ENCODE measurements at regions of chr13 and their contacts with region 1.

Region 1: DNA sequence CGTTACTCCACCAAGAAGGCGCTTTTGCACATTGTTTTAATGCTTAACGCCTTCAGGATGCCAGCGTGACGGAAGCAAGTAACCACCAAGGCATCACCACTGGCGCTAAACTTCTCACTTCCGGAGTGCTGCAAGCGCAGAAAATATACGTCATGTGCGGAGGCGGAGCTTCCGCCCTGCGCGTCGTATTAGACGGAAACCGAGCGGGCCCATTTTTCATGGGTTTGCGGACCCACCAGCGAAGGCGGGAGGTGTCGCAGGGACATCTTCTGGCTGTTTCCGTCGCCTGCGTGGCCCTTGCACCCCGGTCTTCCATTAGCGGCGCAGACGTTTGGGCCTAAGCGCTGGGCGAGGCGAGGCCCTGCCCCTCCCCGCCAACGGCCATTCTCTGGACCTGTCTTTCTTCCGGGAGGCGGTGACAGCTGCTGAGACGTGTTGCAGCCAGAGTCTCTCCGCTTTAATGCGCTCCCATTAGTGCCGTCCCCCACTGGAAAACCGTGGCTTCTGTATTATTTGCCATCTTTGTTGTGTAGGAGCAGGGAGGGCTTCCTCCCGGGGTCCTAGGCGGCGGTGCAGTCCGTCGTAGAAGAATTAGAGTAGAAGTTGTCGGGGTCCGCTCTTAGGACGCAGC is at the start of gene ERCC5:
- DNase-seq: peak; percentile 84 to 99 (median 96)
- ATAC-seq: peak; percentile 77
- H3K4me3 Mint-ChIP-seq: peak within 1 kb of the TSS; percentile 87 to 99 (median 96)
- H3K27ac Mint-ChIP-seq: peak within 1 kb of the TSS; percentile 90 to 100 (median 99)
- H3K4me1 Mint-ChIP-seq: peaks cover 18 to 49% (median 45%) of the 10 kb centered on the region in 4 donors
- H3K27me3 Mint-ChIP-seq: peaks cover 0 to 3% (median 0%) of the 10 kb centered on the region in 5 donors
- polyA plus RNA-seq, gene ERCC5: 42.2 to 56.9 (median 53.1) TPM

Region 2: GRCh38 chr13:102394158-102395053 is 451.3 kb before region 1 on chr13:
- POLR2A ChIA-PET with region 1: interaction called, 13 read pairs
- DNase-seq: peak; percentile 90 to 99 (median 96)
- ATAC-seq: peak; percentile 90 to 92
- H3K4me3 Mint-ChIP-seq: peak overlapping the region; percentile 84 to 94 (median 90)
- H3K27ac Mint-ChIP-seq: peak overlapping the region; percentile 47 to 94 (median 91)
- H3K4me1 Mint-ChIP-seq: peaks cover 7 to 19% (median 15%) of the 10 kb centered on the region in 4 donors
- H3K27me3 Mint-ChIP-seq: peaks cover 7 to 26% (median 13%) of the 10 kb centered on the region in 5 donors

Region 3: GRCh38 chr13:102580552-102581169 is 265.1 kb before region 1 on chr13:
- POLR2A ChIA-PET with region 1: interaction called, 11 read pairs
- DNase-seq: peak in 8 of 10 donors; percentile 8 to 74 (median 45)
- ATAC-seq: peak; percentile 85 to 88
- H3K4me3 Mint-ChIP-seq: no peak overlapping the region
- H3K27ac Mint-ChIP-seq: no peak overlapping the region
- H3K4me1 Mint-ChIP-seq: peaks cover 6 to 20% (median 10%) of the 10 kb centered on the region in 4 donors
- H3K27me3 Mint-ChIP-seq: peaks cover 0 to 7% (median 2%) of the 10 kb centered on the region in 5 donors

Region 4: DNA sequence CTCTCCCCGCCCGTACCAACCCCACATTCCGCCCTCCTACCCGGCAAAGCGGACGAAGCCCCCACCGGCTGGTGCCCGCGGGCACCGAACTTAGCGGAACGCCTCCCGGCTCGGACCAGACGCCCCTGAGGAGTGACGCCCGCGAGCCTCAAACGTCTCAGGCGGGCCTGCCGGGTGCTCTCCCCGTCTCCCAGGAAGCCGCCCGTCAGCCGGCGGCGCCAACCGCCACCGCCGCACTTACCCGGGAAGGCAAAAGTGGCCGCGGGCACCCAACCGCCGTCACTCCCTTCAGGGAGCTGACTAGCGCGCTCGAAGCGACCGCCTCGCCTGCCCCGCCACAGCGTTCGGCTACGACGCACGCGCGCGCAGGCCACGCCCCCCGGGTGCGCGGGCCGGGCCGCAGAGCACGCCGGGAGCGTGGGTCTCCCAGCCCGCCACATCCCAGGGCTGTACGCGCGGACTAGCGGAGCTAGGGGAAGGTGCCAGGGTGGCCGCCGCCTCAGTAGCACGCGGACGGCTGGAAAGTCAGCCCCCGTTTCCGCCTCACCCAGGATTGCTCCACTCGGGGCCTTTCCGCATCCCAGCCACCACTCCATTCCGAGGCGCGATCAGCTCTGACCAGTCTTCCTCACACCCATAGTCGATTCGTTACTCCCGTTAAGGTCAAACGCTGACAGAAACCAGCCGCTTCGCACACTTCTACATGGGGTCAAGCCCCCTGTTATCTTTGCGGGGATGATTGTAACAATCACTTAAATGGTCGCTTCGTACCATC is 72.1 kb before region 1 on chr13 and contains the start of gene TEX30:
- POLR2A ChIA-PET with region 1: interaction called, 63 read pairs
- DNase-seq: peak; percentile 80 to 90 (median 88)
- ATAC-seq: peak; percentile 94 to 95
- H3K4me3 Mint-ChIP-seq: peak within 1 kb of the TSS; percentile 84 to 96 (median 92)
- H3K27ac Mint-ChIP-seq: peak within 1 kb of the TSS; percentile 90 to 97 (median 92)
- H3K4me1 Mint-ChIP-seq: peaks cover 9 to 49% (median 39%) of the 10 kb centered on the region in 4 donors
- H3K27me3 Mint-ChIP-seq: no peaks in the 10 kb centered on the region
- polyA plus RNA-seq, gene TEX30: 23.8 to 25.0 (median 24.3) TPM

Region 5: GRCh38 chr13:102800145-102801041 is 45.4 kb before region 1 on chr13:
- POLR2A ChIA-PET with region 1: interaction called, 32 read pairs
- DNase-seq: peak; percentile 70 to 89 (median 80)
- ATAC-seq: peak; percentile 83 to 84
- H3K4me3 Mint-ChIP-seq: peak overlapping the region; percentile 85 to 95 (median 90)
- H3K27ac Mint-ChIP-seq: peak overlapping the region; percentile 9 to 84 (median 73)
- H3K4me1 Mint-ChIP-seq: peaks cover 11 to 34% (median 28%) of the 10 kb centered on the region in 4 donors
- H3K27me3 Mint-ChIP-seq: peaks cover 0 to 10% (median 4%) of the 10 kb centered on the region in 5 donors

Region 6: DNA sequence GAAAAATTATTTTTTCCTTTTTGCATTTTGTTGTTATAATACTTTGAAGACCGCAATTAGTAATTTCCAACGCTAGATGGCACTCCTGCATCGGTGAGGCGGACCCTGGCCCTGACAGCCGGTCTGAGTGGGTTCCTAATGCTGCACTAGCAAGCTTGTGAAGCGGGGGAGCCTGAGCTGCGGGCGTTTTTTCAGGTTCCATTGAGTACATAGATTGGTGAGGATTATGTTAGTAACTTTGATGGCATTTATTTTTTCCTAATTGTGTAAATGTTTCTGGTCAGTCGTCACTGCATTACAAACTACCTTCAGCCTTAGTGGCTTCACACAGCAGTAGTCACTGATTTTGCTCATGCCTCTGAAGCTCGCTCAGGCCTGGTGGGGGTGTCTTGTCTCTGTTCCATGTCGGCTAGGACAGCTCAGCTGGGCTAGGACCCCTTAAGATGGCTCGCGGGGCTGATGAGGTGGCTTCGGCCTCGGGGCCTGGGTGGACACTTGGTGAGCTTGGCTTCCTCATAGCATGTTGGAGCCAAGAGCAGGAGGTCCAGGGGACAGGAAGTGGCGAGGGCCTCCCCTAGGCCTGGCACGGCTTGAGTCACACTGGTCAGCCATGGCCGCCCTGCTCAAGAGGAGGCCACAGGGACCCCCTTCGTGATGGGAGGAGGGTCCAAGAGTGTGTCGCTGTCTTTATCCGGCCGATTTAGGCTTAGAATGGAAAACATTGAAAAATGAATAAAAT is 25.1 kb after region 1 on chr13:
- POLR2A ChIA-PET with region 1: interaction called, 12 read pairs
- DNase-seq: peak in 9 of 10 donors; percentile 20 to 65 (median 42)
- ATAC-seq: peak; percentile 81 to 84
- H3K4me3 Mint-ChIP-seq: peak overlapping the region in 2 of 10 donors; percentile 33 to 51
- H3K27ac Mint-ChIP-seq: peak overlapping the region; percentile 70 to 92 (median 78)
- H3K4me1 Mint-ChIP-seq: peaks cover 12 to 30% (median 20%) of the 10 kb centered on the region in 4 donors
- H3K27me3 Mint-ChIP-seq: no peaks in the 10 kb centered on the region

Region 7: DNA sequence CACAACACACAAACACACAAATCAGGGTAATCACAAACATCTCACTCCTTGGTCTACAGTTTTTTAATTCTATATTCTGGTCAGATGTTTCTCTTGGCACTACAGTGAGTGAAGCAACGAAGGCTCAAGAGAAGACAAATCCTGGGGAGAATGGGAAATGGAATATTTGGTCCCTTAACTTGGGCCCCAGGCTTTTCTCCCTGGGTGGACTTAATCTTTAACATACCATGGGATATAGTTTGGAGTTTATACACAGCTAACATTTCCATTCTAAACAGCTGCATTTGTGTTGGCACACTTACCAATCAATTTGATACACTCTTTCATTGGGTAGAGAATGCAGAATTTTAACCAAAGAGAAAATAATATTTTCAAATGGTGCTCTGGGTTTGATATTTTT is 1353.1 kb after region 1 on chr13:
- POLR2A ChIA-PET with region 1: no interaction called
- DNase-seq: no peak
- ATAC-seq: no peak
- H3K4me3 Mint-ChIP-seq: no peak overlapping the region
- H3K27ac Mint-ChIP-seq: no peak overlapping the region
- H3K4me1 Mint-ChIP-seq: no peaks in the 10 kb centered on the region
- H3K27me3 Mint-ChIP-seq: no peaks in the 10 kb centered on the region